KBM-7 (cell line): ENCODE measurements at regions of chr11 and their contacts with region 1.

Region 1: DNA sequence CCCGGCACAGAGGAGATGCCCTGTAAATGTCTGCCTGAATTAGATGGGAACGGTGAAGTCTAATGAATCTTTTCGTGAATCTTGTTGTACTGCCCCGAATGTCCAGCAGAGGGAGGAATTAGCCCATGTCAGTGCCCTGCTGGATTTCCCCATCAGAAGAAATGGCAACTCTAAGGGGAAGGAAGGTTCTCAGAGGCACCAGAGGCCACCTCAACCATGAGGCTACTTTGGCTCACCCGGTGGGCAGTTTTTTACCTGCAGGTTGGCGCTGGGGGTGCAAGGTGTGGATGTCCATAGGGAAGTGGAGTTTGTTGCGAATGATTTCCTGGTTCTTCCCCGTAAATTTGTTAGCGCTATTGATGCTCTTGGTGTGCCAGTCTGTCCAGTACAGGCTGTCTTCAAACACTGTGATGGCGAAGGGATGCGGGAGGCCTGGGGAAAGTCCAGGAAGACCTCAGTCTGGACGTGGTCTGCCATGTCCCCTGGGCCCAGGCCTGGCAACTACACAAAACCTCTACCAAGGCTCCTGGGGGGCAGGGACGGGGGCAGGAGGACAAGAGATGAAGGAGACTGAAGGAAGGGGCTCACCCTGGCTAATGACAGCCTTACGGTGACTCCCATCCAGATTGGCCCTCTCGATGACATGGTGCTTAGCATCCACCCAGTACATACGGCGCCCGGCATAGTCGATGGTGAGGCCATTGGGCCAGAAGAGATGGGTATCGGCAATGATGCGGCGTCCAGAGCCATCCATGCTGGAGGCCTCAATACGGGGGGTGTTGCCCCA is 28.5 kb downstream of the LRP4 start:
- DNase-seq: peak; percentile 82

Region 2: GRCh38 chr11:47161134-47161854 is 271.4 kb after region 1 on chr11:
- in situ Hi-C with region 1: loop called (anchors 10 kb)
- DNase-seq: peak; percentile 87

Region 3: DNA sequence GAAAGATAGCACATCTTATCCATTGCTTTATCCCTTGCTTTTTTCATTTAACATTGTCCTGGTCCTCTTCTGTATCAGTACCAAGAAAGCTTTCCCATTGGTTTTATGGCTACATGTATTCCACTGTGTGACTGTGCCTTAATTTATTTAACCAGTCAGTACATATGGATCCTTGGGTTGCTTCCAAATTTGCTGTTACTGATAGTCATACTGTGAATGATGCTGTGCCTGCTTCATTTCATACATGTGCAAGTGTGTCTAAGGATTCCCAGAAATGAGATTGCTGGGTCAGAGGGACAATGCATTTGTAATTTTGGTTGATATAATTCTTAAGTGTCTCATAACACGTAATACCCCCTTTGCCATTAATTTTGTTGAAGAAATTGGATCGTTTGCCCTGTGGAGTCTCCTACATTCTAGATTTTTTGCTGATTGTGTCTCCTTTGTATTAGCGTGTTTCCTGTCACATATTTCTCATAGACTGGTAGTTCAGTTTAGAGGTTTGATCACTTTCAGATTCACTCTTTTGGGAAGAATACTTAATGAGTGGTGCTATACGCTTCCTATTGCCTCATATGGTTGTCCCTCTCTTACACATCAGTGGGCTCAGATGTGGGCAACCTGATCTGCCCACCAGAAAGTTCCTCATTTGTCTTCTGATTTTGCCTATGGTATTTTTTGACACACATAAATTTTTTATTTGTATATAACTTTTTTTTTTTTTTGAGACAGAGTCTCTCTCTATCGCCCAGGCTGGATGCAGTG is 427.4 kb after region 1 on chr11:
- in situ Hi-C with region 1: no loop called
- DNase-seq: no peak